ENCODE measurements at regions of chrX and their contacts with region 1.

Region 1: GRCh38 chrX:130186651-130187050 is 14.9 kb downstream of the RAB33A start:
- DNase-seq: no peak
- ATAC-seq: no peak
- H3K4me3 ChIP-seq: no peak overlapping the region
- H3K4me3 Mint-ChIP-seq: no peak overlapping the region
- H3K27ac ChIP-seq: no peak overlapping the region
- H3K27ac Mint-ChIP-seq: no peak overlapping the region
- H3K4me1 ChIP-seq: peaks cover 5 to 18% of the 10 kb centered on the region in 2 experiments
- H3K4me1 Mint-ChIP-seq: peaks cover 0 to 24% (median 18%) of the 10 kb centered on the region in 3 donors
- H3K27me3 ChIP-seq: no peaks in the 10 kb centered on the region
- H3K27me3 Mint-ChIP-seq: peaks cover 0 to 3% of the 10 kb centered on the region in 2 donors

Region 2: GRCh38 chrX:129599499-129599898 is 587.2 kb before region 1 on chrX:
- CTCF ChIA-PET with region 1: interaction called in 1 of 2 experiments, 12 read pairs
- POLR2A ChIA-PET with region 1: no interaction called
- DNase-seq: no peak
- ATAC-seq: no peak
- H3K4me3 ChIP-seq: no peak overlapping the region
- H3K4me3 Mint-ChIP-seq: no peak overlapping the region
- H3K27ac ChIP-seq: no peak overlapping the region
- H3K27ac Mint-ChIP-seq: no peak overlapping the region
- H3K4me1 ChIP-seq: peaks cover under 1 to 9% of the 10 kb centered on the region in 2 experiments
- H3K4me1 Mint-ChIP-seq: peaks cover 7 to 21% (median 16%) of the 10 kb centered on the region in 3 donors
- H3K27me3 ChIP-seq: no peaks in the 10 kb centered on the region
- H3K27me3 Mint-ChIP-seq: peaks cover 0 to 13% of the 10 kb centered on the region in 2 donors

Region 3: GRCh38 chrX:130079824-130080406 is 106.7 kb before region 1 on chrX:
- CTCF ChIA-PET with region 1: interaction called, 7 to 34 read pairs
- POLR2A ChIA-PET with region 1: no interaction called
- DNase-seq: peak in 31 of 35 experiments; percentile 16 to 79 (median 42)
- ATAC-seq: no peak
- H3K4me3 ChIP-seq: no peak overlapping the region
- H3K4me3 Mint-ChIP-seq: peak overlapping the region in 1 of 3 donors; percentile 40
- H3K27ac ChIP-seq: no peak overlapping the region
- H3K27ac Mint-ChIP-seq: peak overlapping the region; percentile 70 to 76
- H3K4me1 ChIP-seq: peaks cover 5 to 55% of the 10 kb centered on the region in 2 experiments
- H3K4me1 Mint-ChIP-seq: peaks cover 38 to 51% (median 45%) of the 10 kb centered on the region in 3 donors
- H3K27me3 ChIP-seq: no peaks in the 10 kb centered on the region
- H3K27me3 Mint-ChIP-seq: peaks cover 0 to 6% of the 10 kb centered on the region in 2 donors

Region 4: GRCh38 chrX:130120746-130121504 is 65.7 kb before region 1 on chrX:
- CTCF ChIA-PET with region 1: interaction called in 1 of 2 experiments, 15 read pairs
- POLR2A ChIA-PET with region 1: no interaction called
- DNase-seq: peak in 34 of 35 experiments; percentile 33 to 76 (median 57)
- ATAC-seq: peak; percentile 87 to 94 (median 89)
- H3K4me3 ChIP-seq: peak overlapping the region; percentile 39 to 49
- H3K4me3 Mint-ChIP-seq: peak overlapping the region; percentile 64 to 69 (median 68)
- H3K27ac ChIP-seq: no peak overlapping the region
- H3K27ac Mint-ChIP-seq: peak overlapping the region in 1 of 2 donors; percentile 36
- H3K4me1 ChIP-seq: peaks cover 0 to 34% of the 10 kb centered on the region in 2 experiments
- H3K4me1 Mint-ChIP-seq: peaks cover 0 to 20% (median 18%) of the 10 kb centered on the region in 3 donors
- H3K27me3 ChIP-seq: no peaks in the 10 kb centered on the region
- H3K27me3 Mint-ChIP-seq: peaks cover 0 to 8% of the 10 kb centered on the region in 2 donors